KBM-7 (cell line): ENCODE measurements at regions of chr9 and their contacts with region 1.

Region 1: GRCh38 chr9:137406876-137407589 is 15.9 kb downstream of the EXD3 start:
- DNase-seq: peak; percentile 87

Region 2: GRCh38 chr9:137295238-137295811 is 111.7 kb before region 1 on chr9:
- in situ Hi-C with region 1: loop called (anchors 10 kb)
- DNase-seq: peak; percentile 58